OCI-LY7 (cell line): ENCODE measurements at regions of chr4 and their contacts with region 1.

Region 1: DNA sequence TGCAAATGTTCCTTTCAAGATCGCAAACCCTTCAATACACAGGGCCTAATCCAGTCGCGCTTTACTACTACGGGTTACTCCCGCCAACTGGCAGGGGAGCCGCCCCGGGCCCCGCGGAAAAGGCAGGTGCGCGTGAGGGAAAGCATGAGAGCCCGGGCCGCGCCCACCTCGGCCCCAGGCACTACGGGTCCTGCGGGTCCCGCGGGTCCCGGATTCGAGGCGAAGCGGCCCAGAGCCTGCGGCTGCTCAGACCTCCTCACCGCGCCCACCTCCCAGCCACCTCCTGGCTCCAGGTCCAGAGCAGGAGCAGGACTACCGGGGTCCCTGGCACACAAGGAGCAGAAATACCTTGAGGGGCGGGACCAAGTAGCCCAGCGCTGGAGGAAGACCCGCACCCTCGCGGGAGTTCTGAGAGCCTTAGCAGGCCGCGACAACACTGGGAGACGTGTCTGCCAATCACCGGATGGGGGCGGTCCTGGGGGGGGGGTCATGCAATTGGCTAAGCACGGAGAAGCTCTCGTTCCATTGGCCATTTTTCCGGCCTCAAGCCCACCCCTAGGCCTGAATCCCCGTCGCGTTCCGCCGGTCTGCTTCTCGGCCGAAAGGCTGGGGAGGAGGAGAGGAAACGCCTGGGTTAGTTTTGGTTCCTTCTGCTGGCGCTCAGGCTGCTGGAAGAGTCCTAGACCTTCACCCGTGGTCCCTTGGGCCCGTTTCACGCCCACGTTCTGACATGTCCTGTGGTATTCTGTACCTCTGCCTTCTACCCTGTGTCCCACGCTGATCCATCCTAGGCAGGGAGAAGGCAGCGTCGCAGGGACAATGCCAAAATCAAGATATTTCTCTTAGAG is 29.0 kb downstream of the ERVMER34-1 start:
- DNase-seq: peak; percentile 97
- H3K4me3 ChIP-seq: peak overlapping the region; percentile 65
- H3K27ac ChIP-seq: peak overlapping the region; percentile 60
- H3K4me1 ChIP-seq: peaks cover 11% of the 10 kb centered on the region
- CTCF ChIP-seq: no peak

Region 2: DNA sequence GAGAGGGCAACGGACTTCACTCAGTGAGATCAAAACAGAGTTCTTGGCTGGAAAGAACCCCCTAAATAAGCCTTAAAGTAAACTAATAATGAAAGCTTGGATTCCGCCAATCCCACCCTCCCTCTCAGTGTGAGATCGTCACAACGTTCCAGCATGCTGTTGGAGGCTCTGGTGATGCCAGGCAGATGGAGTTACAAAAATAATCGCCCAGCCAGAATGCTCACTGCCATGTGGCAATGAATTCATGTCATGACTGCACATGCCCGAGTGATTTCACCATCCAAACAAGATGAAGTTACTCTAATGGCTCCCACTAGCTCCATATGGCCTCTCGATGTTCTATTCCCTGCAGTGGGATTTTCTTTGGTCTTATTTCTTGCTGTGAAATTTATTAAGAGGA is 423.1 kb before region 1 on chr4:
- CTCF ChIA-PET with region 1: no interaction called
- POLR2A ChIA-PET with region 1: no interaction called
- intact Hi-C with region 1: no loop called
- DNase-seq: no peak
- H3K4me3 ChIP-seq: no peak overlapping the region
- H3K27ac ChIP-seq: no peak overlapping the region
- H3K4me1 ChIP-seq: no peaks in the 10 kb centered on the region
- CTCF ChIP-seq: no peak

Region 3: DNA sequence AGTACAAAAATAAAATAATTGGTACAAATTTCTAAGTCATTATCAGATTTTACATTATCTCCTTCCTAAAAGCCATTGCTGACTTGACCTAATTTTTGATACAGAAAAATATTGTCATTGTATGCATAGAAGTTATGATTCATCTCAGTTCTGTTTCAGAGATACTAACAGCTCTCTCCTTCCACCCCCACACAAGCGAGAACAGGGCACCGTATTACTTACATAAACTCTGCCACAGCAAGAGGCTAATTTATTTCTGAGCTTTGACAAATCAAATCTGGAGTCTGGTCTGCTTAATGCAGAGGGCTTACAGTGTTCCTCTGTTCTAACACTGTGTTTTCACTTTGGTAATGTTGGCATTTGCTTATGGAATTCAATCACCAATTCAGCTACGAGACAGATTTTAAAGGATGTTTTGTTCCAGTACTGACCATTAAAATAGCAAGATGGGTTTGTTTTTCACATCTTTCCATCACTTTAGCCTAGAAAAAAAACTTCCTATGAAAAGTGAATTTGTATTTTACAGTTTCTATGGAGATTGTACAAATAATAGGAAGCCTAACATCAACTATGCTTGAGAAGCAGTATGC is 244.9 kb before region 1 on chr4:
- CTCF ChIA-PET with region 1: no interaction called
- POLR2A ChIA-PET with region 1: no interaction called
- intact Hi-C with region 1: no loop called
- DNase-seq: no peak
- H3K4me3 ChIP-seq: no peak overlapping the region
- H3K27ac ChIP-seq: no peak overlapping the region
- H3K4me1 ChIP-seq: no peaks in the 10 kb centered on the region
- CTCF ChIP-seq: no peak

Region 4: DNA sequence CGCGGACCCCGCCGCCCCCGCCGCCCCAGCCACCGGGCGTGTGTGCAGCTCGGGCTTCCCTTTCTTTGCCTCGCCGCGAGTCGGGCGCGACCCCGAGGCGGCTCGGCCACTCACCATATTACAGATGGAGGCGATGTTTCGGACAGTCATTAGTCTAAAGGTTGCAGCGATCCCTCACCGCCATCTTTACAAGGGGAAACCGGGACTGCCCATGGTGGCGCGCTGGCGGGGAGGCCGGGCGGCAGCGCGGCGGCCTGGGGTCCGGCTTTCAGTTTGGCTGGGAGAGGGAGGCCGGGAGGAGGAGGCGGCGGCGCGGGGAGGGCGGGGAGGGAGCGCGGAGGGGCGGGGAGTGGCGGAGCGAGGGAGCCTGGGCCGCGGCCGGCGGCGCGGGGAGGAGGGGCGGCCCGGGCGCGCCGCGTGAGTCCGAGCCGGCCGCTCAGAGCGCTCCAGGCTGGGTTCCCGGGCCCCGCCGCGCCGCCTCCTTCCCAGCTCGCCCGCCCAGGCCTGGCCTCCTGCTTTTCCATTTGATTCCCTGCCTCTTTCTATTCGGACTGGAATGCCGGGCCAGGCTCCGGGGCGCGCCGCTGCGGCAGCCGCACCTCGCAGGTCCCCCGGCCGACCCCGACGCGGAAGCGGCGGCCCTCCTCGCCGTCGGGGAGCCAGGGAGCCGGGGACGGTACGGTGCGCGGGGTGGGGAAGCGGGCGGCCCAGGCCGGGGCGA is 63.0 kb before region 1 on chr4 and contains the start of gene USP46:
- CTCF ChIA-PET with region 1: no interaction called
- POLR2A ChIA-PET with region 1: interaction called, 3 read pairs
- intact Hi-C with region 1: loop called (anchors 1 kb)
- DNase-seq: peak; percentile 72
- H3K4me3 ChIP-seq: peak within 1 kb of the TSS; percentile 92
- H3K27ac ChIP-seq: peak within 1 kb of the TSS; percentile 52
- H3K4me1 ChIP-seq: peaks cover 21% of the 10 kb centered on the region
- CTCF ChIP-seq: no peak
- total RNA-seq, gene USP46: 5.4 and 5.8 TPM in 2 replicates

Region 5: DNA sequence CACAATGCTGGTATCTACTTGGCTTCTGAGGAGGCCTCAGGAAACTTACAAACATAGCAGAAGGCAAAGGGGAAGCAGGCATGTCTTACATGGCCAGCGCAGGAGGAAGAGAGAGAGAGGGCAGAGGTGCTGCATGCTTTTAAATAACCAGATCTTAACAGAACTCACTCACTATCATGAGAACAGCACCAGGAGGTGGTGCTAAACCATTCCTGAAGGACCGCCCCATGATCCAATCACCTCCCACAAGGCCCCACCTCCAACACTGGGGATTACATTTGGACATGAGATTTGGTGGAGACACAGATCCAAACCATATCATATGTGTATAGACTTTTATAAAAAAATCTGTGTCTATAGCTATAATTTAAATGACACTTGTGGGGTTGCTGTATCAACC is 77.6 kb after region 1 on chr4:
- CTCF ChIA-PET with region 1: no interaction called
- POLR2A ChIA-PET with region 1: no interaction called
- intact Hi-C with region 1: no loop called
- DNase-seq: no peak
- H3K4me3 ChIP-seq: no peak overlapping the region
- H3K27ac ChIP-seq: no peak overlapping the region
- H3K4me1 ChIP-seq: no peaks in the 10 kb centered on the region
- CTCF ChIP-seq: no peak